Caco-2 (cell line): ENCODE measurements at regions of chr17 and their contacts with region 1.

Region 1: GRCh38 chr17:66567234-66568170 is 265.1 kb downstream of the PRKCA start:
- DNase-seq: peak; percentile 85 to 90
- H3K4me3 ChIP-seq: no peak overlapping the region
- H3K4me3 Mint-ChIP-seq: no peak overlapping the region
- H3K27ac Mint-ChIP-seq: no peak overlapping the region
- H3K4me1 ChIP-seq: 0 out of 2 replicates have a peak, but pooled peaks cover 11% of the 10 kb centered on the region
- H3K4me1 Mint-ChIP-seq: peaks cover 8% of the 10 kb centered on the region
- H3K27me3 ChIP-seq: no peaks in the 10 kb centered on the region
- H3K27me3 Mint-ChIP-seq: no peaks in the 10 kb centered on the region
- CTCF ChIP-seq: peak; percentile 84 to 93

Region 2: GRCh38 chr17:66255112-66255511 is 312.4 kb before region 1 on chr17:
- CTCF ChIA-PET with region 1: interaction called, 8 read pairs
- POLR2A ChIA-PET with region 1: no interaction called
- intact Hi-C with region 1: loop called (anchors 1 kb)
- DNase-seq: peak; percentile 47 to 66
- H3K4me3 ChIP-seq: no peak overlapping the region
- H3K4me3 Mint-ChIP-seq: no peak overlapping the region
- H3K27ac Mint-ChIP-seq: no peak overlapping the region
- H3K4me1 ChIP-seq: peaks cover 17% of the 10 kb centered on the region
- H3K4me1 Mint-ChIP-seq: peaks cover 15% of the 10 kb centered on the region
- H3K27me3 ChIP-seq: no peaks in the 10 kb centered on the region
- H3K27me3 Mint-ChIP-seq: no peaks in the 10 kb centered on the region
- CTCF ChIP-seq: peak; percentile 74

Region 3: DNA sequence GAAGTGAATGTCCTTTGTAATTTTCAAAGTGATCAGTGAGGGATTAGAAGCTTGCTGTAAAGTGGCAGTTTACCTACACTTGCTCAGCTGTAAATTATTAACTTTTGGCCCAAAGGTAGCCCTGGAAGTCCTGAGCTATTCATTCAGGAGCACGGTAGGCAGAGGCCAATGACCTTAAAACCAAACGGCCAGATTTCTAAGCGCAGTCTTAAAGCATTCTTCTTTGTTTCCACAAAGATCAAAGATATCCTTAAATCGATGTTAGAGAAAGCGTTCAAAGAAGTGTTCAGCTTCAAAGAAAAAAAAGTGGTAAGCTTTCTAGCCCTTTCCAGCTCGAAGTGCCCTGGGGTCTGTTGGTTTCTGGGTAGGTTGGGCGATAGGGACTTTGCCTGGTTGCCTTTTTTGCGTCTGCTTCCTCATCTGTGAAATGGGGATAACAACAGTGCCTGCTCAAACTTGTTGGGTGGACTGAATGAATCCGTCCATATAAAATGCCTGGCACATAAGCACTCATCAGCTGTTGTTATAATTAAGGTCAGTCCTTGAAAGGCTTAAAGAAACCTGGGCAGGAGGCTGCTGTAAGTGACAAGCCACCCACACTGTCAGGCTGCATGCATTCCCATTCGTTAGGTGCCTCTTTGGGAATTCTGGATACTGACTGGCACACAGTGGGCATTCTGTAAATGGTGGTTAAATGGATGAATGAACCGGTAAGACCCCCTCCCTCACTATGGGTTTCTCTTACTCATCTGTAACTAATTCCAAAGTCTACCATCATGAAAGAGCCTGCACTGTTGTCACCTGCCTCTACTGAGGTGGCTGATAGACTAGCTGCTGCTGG is 151.9 kb before region 1 on chr17:
- CTCF ChIA-PET with region 1: no interaction called
- POLR2A ChIA-PET with region 1: no interaction called
- intact Hi-C with region 1: loop called (anchors 2 kb)
- DNase-seq: peak; percentile 80 to 82
- H3K4me3 ChIP-seq: no peak overlapping the region
- H3K4me3 Mint-ChIP-seq: peak overlapping the region; percentile 50
- H3K27ac Mint-ChIP-seq: peak overlapping the region; percentile 60
- H3K4me1 ChIP-seq: peaks cover 72% of the 10 kb centered on the region
- H3K4me1 Mint-ChIP-seq: peaks cover 51% of the 10 kb centered on the region
- H3K27me3 ChIP-seq: no peaks in the 10 kb centered on the region
- H3K27me3 Mint-ChIP-seq: no peaks in the 10 kb centered on the region
- CTCF ChIP-seq: no peak

Region 4: GRCh38 chr17:66466840-66467367 is 100.6 kb before region 1 on chr17:
- CTCF ChIA-PET with region 1: interaction called, 4 read pairs
- POLR2A ChIA-PET with region 1: no interaction called
- intact Hi-C with region 1: loop called (anchors 5 kb)
- DNase-seq: peak; percentile 72 to 76
- H3K4me3 ChIP-seq: no peak overlapping the region
- H3K4me3 Mint-ChIP-seq: peak overlapping the region; percentile 49
- H3K27ac Mint-ChIP-seq: peak overlapping the region; percentile 68
- H3K4me1 ChIP-seq: peaks cover 43% of the 10 kb centered on the region
- H3K4me1 Mint-ChIP-seq: peaks cover 31% of the 10 kb centered on the region
- H3K27me3 ChIP-seq: no peaks in the 10 kb centered on the region
- H3K27me3 Mint-ChIP-seq: no peaks in the 10 kb centered on the region
- CTCF ChIP-seq: no peak

Region 5: GRCh38 chr17:66673668-66674315 is 106.3 kb after region 1 on chr17:
- CTCF ChIA-PET with region 1: interaction called, 12 read pairs
- POLR2A ChIA-PET with region 1: no interaction called
- intact Hi-C with region 1: loop called (anchors 5 kb)
- DNase-seq: peak; percentile 54 to 72
- H3K4me3 ChIP-seq: no peak overlapping the region
- H3K4me3 Mint-ChIP-seq: no peak overlapping the region
- H3K27ac Mint-ChIP-seq: peak overlapping the region; percentile 14
- H3K4me1 ChIP-seq: peaks cover 13% of the 10 kb centered on the region
- H3K4me1 Mint-ChIP-seq: peaks cover 19% of the 10 kb centered on the region
- H3K27me3 ChIP-seq: no peaks in the 10 kb centered on the region
- H3K27me3 Mint-ChIP-seq: no peaks in the 10 kb centered on the region
- CTCF ChIP-seq: peak; percentile 66 to 81